OCI-LY7 (cell line): ENCODE measurements at regions of chr2 and their contacts with region 1.

Region 1: DNA sequence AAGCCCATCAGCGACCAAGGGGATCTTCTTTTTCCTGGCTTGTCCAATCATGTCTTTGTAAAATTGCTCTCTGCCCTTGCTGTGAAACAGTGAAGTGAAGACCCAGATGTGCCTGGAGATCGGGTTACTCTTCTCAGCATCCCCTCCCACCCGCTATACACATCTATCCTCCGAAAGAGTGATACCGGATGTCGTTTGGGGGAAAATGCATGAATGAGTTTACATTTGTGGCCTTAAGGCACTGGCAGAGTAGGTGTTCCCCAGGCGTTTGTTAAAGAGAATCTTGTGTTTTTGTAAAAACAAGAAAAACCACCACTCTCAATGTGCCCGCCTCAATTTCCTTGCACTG is 528.3 kb downstream of the CMPK2 start:
- DNase-seq: peak; percentile 86
- H3K4me3 ChIP-seq: peak overlapping the region; percentile 70
- H3K27ac ChIP-seq: peak overlapping the region; percentile 98
- H3K4me1 ChIP-seq: peaks cover 63% of the 10 kb centered on the region
- CTCF ChIP-seq: no peak

Region 2: GRCh38 chr2:6224267-6224666 is 113.2 kb before region 1 on chr2:
- CTCF ChIA-PET with region 1: no interaction called
- POLR2A ChIA-PET with region 1: interaction called, 5 read pairs
- intact Hi-C with region 1: loop called (anchors 2 kb)
- DNase-seq: peak; percentile 83
- H3K4me3 ChIP-seq: peak overlapping the region; percentile 37
- H3K27ac ChIP-seq: peak overlapping the region; percentile 61
- H3K4me1 ChIP-seq: peaks cover 33% of the 10 kb centered on the region
- CTCF ChIP-seq: no peak

Region 3: DNA sequence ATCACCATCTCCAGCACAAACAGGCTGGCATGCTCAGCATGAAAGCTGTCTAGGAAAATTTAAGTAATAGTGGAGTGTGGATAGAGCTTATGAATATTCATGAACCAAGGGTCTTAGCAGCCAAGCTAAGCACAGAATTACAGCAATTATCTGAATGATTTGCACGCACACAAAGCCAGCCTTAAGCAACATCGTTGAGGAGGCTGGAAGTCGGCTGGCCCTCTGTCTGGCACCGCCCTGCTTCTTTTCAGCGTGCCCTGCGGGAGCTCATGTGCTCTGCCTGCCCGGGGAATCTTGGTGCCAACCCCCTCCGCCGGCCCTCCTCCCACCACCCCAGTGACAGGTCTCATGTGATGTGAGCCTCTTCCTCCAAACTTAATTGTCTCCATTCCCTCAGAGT is 11.8 kb before region 1 on chr2:
- CTCF ChIA-PET with region 1: no interaction called
- POLR2A ChIA-PET with region 1: interaction called, 11 read pairs
- intact Hi-C with region 1: no loop called
- DNase-seq: no peak
- H3K4me3 ChIP-seq: no peak overlapping the region
- H3K27ac ChIP-seq: no peak overlapping the region
- H3K4me1 ChIP-seq: no peaks in the 10 kb centered on the region
- CTCF ChIP-seq: no peak

Region 4: DNA sequence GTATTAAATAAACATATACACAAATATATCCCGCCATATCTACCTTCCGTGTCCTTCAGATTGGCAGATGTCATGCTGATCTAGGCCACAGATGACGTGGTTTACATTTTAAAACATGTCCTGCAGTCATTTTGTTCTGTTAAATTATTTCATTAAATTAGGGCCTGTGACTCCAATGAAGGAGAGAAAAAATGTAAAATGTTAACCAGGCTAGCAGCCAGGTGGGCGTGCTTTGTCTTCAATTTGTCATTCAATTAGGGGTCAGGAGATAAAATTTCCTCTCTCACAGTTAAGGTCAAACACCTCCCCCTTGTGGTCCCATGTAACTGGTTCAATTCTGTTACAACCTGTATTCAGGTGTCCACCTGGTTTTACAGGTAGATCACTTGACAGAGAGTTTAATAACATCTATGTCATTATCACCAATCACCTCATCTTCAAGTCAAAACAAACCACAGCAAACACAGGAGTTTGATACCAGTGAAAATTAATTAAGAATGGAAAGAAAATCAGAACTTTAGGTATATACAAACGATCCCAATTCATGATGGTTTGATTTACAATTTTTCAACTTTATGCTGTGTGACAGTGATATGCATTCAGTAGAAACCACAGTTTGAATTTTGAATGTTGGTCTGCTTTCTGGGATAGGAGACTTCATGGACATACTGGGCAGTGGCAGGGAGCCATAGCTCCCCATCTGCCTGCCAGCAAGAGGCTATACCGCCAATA is 188.8 kb after region 1 on chr2:
- CTCF ChIA-PET with region 1: no interaction called
- POLR2A ChIA-PET with region 1: interaction called, 3 read pairs
- intact Hi-C with region 1: loop called (anchors 2 kb)
- DNase-seq: peak; percentile 78
- H3K4me3 ChIP-seq: no peak overlapping the region
- H3K27ac ChIP-seq: no peak overlapping the region
- H3K4me1 ChIP-seq: peaks cover 14% of the 10 kb centered on the region
- CTCF ChIP-seq: peak; percentile 96

Region 5: GRCh38 chr2:6754419-6754818 is 417.0 kb after region 1 on chr2:
- CTCF ChIA-PET with region 1: no interaction called
- POLR2A ChIA-PET with region 1: no interaction called
- intact Hi-C with region 1: no loop called
- DNase-seq: no peak
- H3K4me3 ChIP-seq: no peak overlapping the region
- H3K27ac ChIP-seq: no peak overlapping the region
- H3K4me1 ChIP-seq: no peaks in the 10 kb centered on the region
- CTCF ChIP-seq: no peak